Activated T-helper 1 cell treated with anti-CD3 and anti-CD28 coated beads, Interleukin-12 subunit alpha, Interleukin-12 subunit beta, Interleukin-2, Interleukin-4 antibody, amounts not matched to agents 30 ng/mL and 10 ng/mL and 1 ng/mL, durations not matched to agents 14 hours and 24 hours and 36 hours (primary cell): ENCODE measurements at regions of chr12 and their contacts with region 1.

Region 1: GRCh38 chr12:96516472-96517430 is 27.4 kb downstream of the CFAP54 start:
- DNase-seq: peak; percentile 71
- H3K4me3 Mint-ChIP-seq: peak overlapping the region; percentile 47
- H3K27ac Mint-ChIP-seq: peak overlapping the region; percentile 70
- H3K4me1 Mint-ChIP-seq: peaks cover 18% of the 10 kb centered on the region
- H3K27me3 Mint-ChIP-seq: no peaks in the 10 kb centered on the region

Region 2: DNA sequence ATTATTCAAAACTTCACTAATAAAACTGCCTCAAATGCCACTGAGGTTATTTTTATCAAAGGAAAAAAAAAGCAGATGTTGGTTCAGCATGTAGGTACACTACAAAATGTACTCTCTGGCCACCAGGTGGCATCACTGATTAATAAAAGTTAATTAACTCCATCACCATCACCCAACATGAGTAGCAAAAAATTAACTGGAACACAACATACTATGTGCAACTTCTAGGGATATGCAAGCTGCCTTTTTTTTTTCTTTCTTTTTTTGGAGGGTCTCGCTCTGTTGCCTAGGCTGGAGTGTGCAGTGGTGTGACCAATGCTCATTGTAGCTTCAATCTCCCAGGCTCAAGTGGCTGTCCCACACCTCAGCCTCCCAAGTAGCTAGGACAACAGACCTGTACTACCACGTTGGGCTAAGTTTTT is 1399.6 kb before region 1 on chr12:
- intact Hi-C with region 1: loop called (anchors 2 kb)
- DNase-seq: peak; percentile 26
- H3K4me3 Mint-ChIP-seq: no peak overlapping the region
- H3K27ac Mint-ChIP-seq: no peak overlapping the region
- H3K4me1 Mint-ChIP-seq: no peaks in the 10 kb centered on the region
- H3K27me3 Mint-ChIP-seq: no peaks in the 10 kb centered on the region

Region 3: DNA sequence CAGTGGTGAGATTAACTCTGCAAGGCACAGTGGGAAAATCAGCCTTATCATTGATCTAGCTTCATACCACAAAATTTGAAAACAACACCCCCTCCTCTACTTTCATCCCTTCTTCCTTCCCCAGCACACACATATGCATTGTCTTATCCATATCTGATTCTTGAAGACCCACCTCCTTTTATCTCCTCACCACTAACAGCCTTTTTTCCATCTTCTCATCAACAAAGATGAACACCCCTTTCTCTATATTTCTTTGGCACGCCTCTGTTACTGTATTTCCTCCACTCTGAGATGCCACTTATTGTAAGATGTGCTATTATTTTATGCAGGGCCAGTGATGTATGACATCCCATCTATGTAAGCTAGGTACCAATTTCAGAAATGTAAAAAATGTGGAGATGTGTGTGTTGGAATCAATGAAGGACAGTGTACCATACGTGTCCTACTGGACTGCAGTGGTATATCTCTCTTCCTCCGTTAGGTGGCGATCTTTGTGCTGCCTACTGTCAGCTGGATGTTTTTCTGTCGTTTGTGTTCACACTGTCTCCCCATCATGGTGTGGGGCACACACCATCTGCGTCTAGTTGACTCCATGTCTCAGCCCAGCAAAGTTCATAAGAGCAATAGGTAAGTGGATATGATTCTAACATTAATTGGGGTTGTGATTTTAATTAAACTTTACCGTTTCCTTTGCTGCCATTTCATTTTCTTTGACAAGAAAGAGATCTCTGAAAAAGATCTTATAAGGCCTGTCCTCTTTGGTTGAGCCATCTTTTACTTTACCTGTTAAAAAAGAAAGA is 598.4 kb before region 1 on chr12:
- intact Hi-C with region 1: loop called (anchors 2 kb)
- DNase-seq: peak; percentile 17
- H3K4me3 Mint-ChIP-seq: no peak overlapping the region
- H3K27ac Mint-ChIP-seq: no peak overlapping the region
- H3K4me1 Mint-ChIP-seq: no peaks in the 10 kb centered on the region
- H3K27me3 Mint-ChIP-seq: peaks cover 20% of the 10 kb centered on the region

Region 4: DNA sequence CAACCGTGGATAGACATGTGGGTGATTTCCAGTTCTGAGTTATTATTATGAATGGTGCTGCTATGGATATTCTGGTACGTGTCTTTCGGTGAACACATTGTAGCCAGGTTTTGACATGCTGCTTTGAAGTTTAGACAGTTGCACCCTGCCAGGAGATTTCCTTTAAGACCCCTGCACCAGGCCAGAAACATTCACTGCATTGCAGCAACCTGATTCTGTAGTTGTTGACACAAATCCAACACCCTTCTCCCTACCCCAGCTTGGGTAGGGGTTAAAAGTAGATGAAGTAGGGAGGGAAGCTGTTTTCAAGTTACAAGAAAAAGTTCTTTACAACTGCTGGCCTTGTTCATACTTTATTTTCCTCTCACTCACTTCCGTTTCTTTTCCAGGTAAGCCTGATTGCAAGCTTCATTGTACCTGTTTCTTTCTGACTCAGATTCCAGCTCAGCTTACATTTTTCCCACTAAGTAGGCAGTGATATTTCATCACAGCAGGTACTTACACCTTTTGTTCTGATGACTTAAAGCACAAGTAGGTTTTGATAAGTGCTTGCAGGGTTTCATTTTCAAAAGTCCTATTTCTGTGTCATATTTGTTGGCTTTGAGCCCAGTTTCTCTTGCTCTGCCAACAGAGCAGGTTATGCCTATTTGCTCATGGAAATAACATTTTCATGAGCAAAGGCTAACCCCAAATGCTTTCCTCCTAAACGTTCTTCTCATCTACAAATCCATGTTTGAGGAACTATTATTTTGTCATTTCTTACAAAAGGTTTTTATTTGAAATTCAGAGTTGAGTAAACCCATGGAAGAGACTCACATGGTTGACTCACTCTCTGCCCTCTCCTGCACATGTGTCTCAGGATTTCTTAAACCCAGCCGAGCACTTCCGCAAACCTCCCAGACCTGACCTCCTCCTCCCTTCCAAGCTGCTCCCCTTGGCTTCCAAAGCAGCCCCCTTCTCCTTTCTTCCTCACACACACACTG is 469.2 kb before region 1 on chr12:
- intact Hi-C with region 1: loop called (anchors 1 kb)
- DNase-seq: peak; percentile 4
- H3K4me3 Mint-ChIP-seq: peak overlapping the region; percentile 67
- H3K27ac Mint-ChIP-seq: peak overlapping the region; percentile 89
- H3K4me1 Mint-ChIP-seq: peaks cover 47% of the 10 kb centered on the region
- H3K27me3 Mint-ChIP-seq: no peaks in the 10 kb centered on the region

Region 5: DNA sequence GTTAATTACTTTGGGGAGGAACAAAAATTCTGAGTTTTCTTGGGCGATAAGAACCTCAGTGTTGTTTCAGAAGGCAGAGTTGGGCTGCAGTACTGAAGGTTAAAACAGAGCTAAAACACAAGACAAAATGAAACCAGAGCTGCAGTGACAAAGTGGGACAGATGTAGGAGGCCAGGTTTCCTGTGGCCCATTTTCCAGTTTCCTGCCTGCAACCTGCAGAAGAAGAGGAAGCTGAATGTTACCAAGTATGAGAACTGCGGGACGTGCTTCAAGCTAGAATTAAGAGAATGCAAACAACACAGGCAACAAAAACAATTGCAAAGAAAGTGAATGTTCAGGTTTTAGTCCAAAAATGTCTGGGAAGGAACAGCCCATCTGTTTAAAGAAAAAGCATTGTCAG is 304.8 kb before region 1 on chr12:
- intact Hi-C with region 1: loop called (anchors 1 kb)
- DNase-seq: no peak
- H3K4me3 Mint-ChIP-seq: peak overlapping the region; percentile 76
- H3K27ac Mint-ChIP-seq: peak overlapping the region; percentile 76
- H3K4me1 Mint-ChIP-seq: peaks cover 78% of the 10 kb centered on the region
- H3K27me3 Mint-ChIP-seq: no peaks in the 10 kb centered on the region

Region 6: DNA sequence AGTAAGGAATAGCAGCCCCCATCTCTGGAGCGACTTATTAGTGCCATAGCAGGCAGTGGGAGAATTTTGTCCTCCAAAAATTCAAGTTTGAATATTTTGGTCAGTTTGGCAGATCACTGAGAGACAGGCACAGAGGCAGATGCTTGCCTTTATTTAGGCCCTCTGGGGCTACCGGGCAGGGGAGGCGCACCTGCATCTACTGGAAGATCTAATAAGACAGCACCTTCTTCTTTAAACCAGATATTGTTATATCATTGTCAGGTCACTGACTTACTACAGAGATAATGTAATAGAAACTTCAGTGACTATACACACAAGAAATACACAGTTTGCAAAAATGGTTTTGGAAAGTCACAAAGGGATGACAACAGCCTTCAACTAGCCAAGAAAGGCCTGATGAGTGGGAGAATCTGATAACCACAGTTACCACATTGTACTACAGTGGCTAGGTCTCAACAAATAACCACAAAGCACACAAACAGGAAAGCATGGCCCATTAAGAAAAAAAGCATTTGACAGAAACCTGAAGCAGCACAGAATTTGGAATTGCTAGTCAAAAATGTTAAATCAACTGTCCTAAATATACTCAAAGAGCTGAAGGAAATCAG is 173.3 kb before region 1 on chr12:
- intact Hi-C with region 1: loop called (anchors 5 kb)
- DNase-seq: peak; percentile 21
- H3K4me3 Mint-ChIP-seq: peak overlapping the region; percentile 24
- H3K27ac Mint-ChIP-seq: peak overlapping the region; percentile 79
- H3K4me1 Mint-ChIP-seq: peaks cover 54% of the 10 kb centered on the region
- H3K27me3 Mint-ChIP-seq: no peaks in the 10 kb centered on the region

Region 7: DNA sequence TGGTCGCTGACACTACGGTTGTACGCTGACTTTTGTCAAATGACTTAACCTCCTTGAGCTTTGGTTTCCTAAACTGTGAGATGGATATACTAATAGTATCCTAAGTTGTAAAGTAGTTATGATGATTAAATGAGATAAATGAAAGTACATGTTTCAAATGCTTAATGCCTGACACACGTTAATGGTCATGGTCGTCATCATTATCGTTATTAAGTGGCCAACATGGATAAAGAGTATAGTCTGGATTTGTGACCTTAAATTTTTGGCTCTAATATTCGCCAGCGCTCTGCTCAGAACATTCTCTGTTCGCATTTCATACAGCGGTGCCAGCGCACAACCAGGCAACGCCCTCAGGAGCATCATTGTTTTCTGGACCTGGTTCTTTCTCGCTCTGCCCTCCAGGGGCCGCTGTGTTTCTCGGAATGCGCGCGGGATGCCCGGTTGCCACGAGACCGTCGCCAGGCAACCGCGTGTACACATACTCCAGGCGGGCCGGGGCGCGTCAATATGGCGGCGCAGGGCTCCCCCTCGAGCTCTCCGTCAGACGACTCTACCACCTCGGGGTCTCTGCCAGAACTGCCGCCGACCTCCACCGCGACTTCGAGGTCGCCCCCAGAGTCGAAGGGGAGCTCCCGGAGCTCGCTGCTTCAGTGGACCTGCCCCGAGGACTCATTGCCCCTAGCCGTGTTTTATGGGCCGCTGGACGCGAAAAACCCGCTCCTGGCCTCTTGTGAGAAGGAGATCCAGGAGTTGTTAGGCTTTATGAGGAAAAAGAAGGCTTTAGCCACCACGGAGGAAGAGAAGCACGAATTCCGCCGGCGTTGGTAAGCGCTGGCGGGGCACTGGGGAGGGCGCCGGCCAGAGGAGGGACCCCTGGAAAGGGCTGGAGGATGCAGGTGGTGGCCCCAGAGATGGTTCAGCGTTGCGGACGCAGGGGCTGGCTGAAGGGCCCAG is 27.4 kb before region 1 on chr12 and contains the start of gene CFAP54:
- intact Hi-C with region 1: loop called (anchors 1 kb)
- DNase-seq: peak; percentile 92
- H3K4me3 Mint-ChIP-seq: peak within 1 kb of the TSS; percentile 86
- H3K27ac Mint-ChIP-seq: peak within 1 kb of the TSS; percentile 85
- H3K4me1 Mint-ChIP-seq: peaks cover 43% of the 10 kb centered on the region
- H3K27me3 Mint-ChIP-seq: peaks cover 25% of the 10 kb centered on the region
- total RNA-seq, gene CFAP54: 0.17 and 0.34 TPM in 2 replicates

Region 8: GRCh38 chr12:96814200-96814599 is 297.4 kb after region 1 on chr12:
- intact Hi-C with region 1: no loop called
- DNase-seq: no peak
- H3K4me3 Mint-ChIP-seq: no peak overlapping the region
- H3K27ac Mint-ChIP-seq: no peak overlapping the region
- H3K4me1 Mint-ChIP-seq: no peaks in the 10 kb centered on the region
- H3K27me3 Mint-ChIP-seq: no peaks in the 10 kb centered on the region